MCF 10A (cell line): ENCODE measurements at regions of chr13 and their contacts with region 1.

Region 1: GRCh38 chr13:43905435-43906031 is 25.8 kb downstream of the LACC1 start:
- DNase-seq: peak; percentile 67
- H3K4me3 Mint-ChIP-seq: no peak overlapping the region
- H3K27ac Mint-ChIP-seq: no peak overlapping the region
- H3K4me1 Mint-ChIP-seq: peaks cover 8% of the 10 kb centered on the region
- H3K27me3 Mint-ChIP-seq: no peaks in the 10 kb centered on the region
- CTCF ChIP-seq: peak; percentile 70

Region 2: GRCh38 chr13:43848001-43848649 is 57.4 kb before region 1 on chr13:
- CTCF ChIA-PET with region 1: no interaction called
- POLR2A ChIA-PET with region 1: no interaction called
- intact Hi-C with region 1: no loop called
- DNase-seq: peak; percentile 56
- H3K4me3 Mint-ChIP-seq: no peak overlapping the region
- H3K27ac Mint-ChIP-seq: peak overlapping the region; percentile 62
- H3K4me1 Mint-ChIP-seq: peaks cover 9% of the 10 kb centered on the region
- H3K27me3 Mint-ChIP-seq: no peaks in the 10 kb centered on the region
- CTCF ChIP-seq: no peak

Region 3: GRCh38 chr13:43965459-43965845 is 59.9 kb after region 1 on chr13:
- CTCF ChIA-PET with region 1: interaction called, 10 read pairs
- POLR2A ChIA-PET with region 1: no interaction called
- intact Hi-C with region 1: no loop called
- DNase-seq: no peak
- H3K4me3 Mint-ChIP-seq: no peak overlapping the region
- H3K27ac Mint-ChIP-seq: no peak overlapping the region
- H3K4me1 Mint-ChIP-seq: no peaks in the 10 kb centered on the region
- H3K27me3 Mint-ChIP-seq: no peaks in the 10 kb centered on the region
- CTCF ChIP-seq: no peak

Region 4: DNA sequence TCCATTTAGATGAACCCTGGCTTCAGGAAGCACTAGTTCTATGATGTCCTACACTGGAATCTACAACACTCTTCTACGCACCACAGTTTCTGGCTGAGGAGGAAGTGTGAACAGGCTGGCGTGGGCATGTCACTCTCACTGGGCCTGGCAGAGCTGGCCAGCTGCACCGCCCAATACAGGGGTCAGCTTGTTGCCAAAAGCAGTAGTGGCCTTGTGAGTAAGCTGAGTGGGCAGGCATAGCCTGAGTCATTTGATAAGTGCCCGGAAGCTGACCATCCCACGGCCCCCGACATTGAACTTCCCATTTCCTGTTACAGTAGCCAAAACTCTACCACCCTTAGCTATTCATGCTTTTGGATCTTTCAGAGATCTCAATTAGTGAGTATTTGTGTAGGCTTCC is 227.2 kb after region 1 on chr13:
- CTCF ChIA-PET with region 1: interaction called, 3 read pairs
- POLR2A ChIA-PET with region 1: no interaction called
- intact Hi-C with region 1: loop called (anchors 10 kb)
- DNase-seq: peak; percentile 43
- H3K4me3 Mint-ChIP-seq: no peak overlapping the region
- H3K27ac Mint-ChIP-seq: peak overlapping the region; percentile 25
- H3K4me1 Mint-ChIP-seq: no peaks in the 10 kb centered on the region
- H3K27me3 Mint-ChIP-seq: no peaks in the 10 kb centered on the region
- CTCF ChIP-seq: no peak

Region 5: GRCh38 chr13:44312898-44313551 is 407.5 kb after region 1 on chr13:
- CTCF ChIA-PET with region 1: interaction called, 5 read pairs
- POLR2A ChIA-PET with region 1: no interaction called
- intact Hi-C with region 1: loop called (anchors 5 kb)
- DNase-seq: peak; percentile 94
- H3K4me3 Mint-ChIP-seq: peak overlapping the region; percentile 22
- H3K27ac Mint-ChIP-seq: peak overlapping the region; percentile 93
- H3K4me1 Mint-ChIP-seq: peaks cover 67% of the 10 kb centered on the region
- H3K27me3 Mint-ChIP-seq: no peaks in the 10 kb centered on the region
- CTCF ChIP-seq: no peak

Region 6: DNA sequence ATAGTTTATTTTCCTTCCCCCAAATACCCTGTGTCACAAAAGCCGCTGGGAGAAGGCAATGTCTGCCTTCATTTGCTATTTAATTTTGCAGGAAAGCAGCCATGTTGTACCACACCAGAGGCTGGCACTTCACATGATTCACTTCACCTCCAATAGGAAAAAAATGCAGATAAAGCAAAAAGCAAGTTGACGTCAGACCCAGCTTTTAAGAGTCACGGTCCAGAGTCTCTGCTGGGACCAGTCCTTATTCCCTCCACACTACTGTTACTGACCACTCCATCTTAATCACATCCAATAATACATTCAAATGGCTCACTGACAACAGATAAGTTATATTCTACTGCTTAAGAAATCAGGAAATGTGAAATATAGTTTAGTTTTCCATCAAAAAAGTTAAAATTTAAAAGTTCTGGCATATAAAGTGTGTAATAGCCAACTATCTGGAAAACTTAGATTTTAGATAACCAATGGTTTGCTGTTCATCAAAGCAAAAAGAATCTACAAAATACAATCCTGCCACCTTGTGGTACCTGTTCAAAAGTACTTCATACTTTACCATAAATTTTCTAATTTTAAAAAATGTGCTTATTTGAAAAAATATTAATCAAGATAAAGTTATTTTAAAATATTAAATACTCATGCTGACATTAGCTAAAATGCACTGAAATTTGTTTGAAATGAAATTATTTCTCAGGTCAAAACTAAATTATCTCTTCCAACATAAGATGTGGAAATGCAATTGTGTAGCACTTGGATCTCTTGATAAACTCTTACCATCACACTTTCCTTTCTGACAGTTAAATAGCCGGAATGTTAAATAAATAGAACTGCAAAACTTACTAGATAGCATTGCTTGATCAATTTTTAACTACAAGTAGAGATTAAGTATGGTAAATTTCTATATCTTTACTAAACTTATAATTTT is 565.4 kb after region 1 on chr13:
- CTCF ChIA-PET with region 1: interaction called, 63 read pairs
- POLR2A ChIA-PET with region 1: interaction called, 7 read pairs
- intact Hi-C with region 1: loop called (anchors 1 kb)
- DNase-seq: peak; percentile 50
- H3K4me3 Mint-ChIP-seq: no peak overlapping the region
- H3K27ac Mint-ChIP-seq: no peak overlapping the region
- H3K4me1 Mint-ChIP-seq: peaks cover 6% of the 10 kb centered on the region
- H3K27me3 Mint-ChIP-seq: no peaks in the 10 kb centered on the region
- CTCF ChIP-seq: peak; percentile 58

Region 7: GRCh38 chr13:44969551-44970484 is 1064.3 kb after region 1 on chr13:
- CTCF ChIA-PET with region 1: interaction called, 3 read pairs
- POLR2A ChIA-PET with region 1: no interaction called
- intact Hi-C with region 1: loop called (anchors 5 kb)
- DNase-seq: peak; percentile 66
- H3K4me3 Mint-ChIP-seq: no peak overlapping the region
- H3K27ac Mint-ChIP-seq: no peak overlapping the region
- H3K4me1 Mint-ChIP-seq: peaks cover 15% of the 10 kb centered on the region
- H3K27me3 Mint-ChIP-seq: no peaks in the 10 kb centered on the region
- CTCF ChIP-seq: peak; percentile 70